ENCODE measurements at regions of chr6 and their contacts with region 1.

Region 1: GRCh38 chr6:119110601-119111548 is 32.4 kb upstream of the FAM184A start:
- DNase-seq: peak; percentile 51
- ATAC-seq: peak; percentile 86
- H3K4me3 Mint-ChIP-seq: no peak overlapping the region
- H3K27ac Mint-ChIP-seq: no peak overlapping the region
- H3K4me1 Mint-ChIP-seq: peaks cover 21% of the 10 kb centered on the region
- H3K27me3 Mint-ChIP-seq: no peaks in the 10 kb centered on the region

Region 2: DNA sequence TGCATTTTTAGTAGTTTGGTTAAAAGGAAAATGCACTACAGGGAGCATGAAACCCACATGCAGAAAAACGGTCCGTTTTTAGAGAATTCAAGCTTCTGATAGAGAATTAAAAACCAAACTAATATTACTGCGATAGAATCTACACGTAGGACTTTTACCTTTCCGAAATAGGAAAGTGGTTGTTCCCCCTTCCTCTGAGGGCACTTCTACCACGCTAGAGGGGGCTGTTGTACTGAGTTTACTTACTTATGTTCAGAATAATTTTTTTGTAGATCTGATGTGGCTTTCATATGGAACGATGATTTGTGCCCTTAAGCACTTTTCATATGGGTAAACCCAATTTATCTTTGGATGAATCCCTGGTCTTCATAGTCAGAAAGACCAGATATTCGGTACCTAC is 827.1 kb before region 1 on chr6:
- CTCF ChIA-PET with region 1: interaction called, 4 read pairs
- POLR2A ChIA-PET with region 1: no interaction called
- intact Hi-C with region 1: loop called (anchors 1 to 5 kb)
- DNase-seq: peak; percentile 65
- ATAC-seq: peak; percentile 61
- H3K4me3 Mint-ChIP-seq: no peak overlapping the region
- H3K27ac Mint-ChIP-seq: no peak overlapping the region
- H3K4me1 Mint-ChIP-seq: peaks cover 2% of the 10 kb centered on the region
- H3K27me3 Mint-ChIP-seq: peaks cover 4% of the 10 kb centered on the region

Region 3: DNA sequence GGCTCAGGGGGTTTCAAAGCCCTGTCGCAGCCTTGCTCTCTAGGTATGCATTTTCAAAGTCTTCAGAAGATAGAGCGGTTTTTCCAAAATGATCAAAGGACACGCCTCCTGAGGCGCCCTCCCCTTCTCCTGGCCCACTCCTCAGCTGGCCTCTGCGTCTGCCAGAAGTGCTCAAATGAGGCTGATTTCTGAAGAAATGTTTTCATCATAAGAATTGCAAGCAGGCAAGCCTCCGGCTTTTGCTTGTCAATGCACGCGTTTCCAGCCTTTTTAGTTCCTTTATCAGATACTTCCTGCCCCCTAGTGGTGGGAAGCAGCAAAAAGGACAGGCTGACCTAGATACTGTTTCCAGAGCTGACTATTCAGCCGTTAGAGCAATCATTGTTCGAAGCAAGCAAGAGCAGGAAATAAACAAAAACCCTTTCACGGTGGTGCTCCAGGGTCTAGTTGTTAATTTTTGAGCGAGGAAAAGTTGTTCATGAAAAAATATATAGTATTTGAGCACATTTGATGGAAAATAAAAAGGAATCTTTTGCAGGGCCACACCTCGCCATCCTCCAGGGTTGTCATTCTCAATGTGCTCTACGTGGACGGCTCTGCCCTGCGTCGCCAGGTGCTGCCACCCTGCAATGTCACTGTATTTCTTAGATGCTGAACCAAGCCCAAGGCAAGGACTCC is 310.3 kb before region 1 on chr6:
- CTCF ChIA-PET with region 1: interaction called, 13 read pairs
- POLR2A ChIA-PET with region 1: no interaction called
- intact Hi-C with region 1: loop called in 1 of 2 experiments (anchors 2 kb)
- DNase-seq: peak; percentile 89
- ATAC-seq: peak; percentile 96
- H3K4me3 Mint-ChIP-seq: no peak overlapping the region
- H3K27ac Mint-ChIP-seq: peak overlapping the region; percentile 7
- H3K4me1 Mint-ChIP-seq: peaks cover 28% of the 10 kb centered on the region
- H3K27me3 Mint-ChIP-seq: no peaks in the 10 kb centered on the region

Region 4: DNA sequence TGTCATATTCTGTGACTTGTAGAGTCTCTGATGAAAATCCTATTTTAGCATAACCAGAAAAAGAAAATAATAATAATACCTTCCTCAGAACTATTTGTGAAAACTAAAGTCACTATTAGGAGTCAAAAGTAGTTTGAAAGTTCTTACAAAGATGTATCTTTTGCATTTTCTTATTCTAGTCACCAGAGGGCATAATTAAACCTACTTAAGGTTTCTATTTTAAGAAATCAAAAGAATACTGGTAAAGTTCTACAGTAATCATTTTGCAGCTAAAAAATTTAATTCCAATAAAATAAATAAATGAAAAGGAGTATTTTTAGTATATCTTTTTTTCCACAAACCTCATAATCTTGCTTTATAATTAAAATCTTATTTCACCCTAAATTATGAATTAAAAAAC is 147.9 kb before region 1 on chr6:
- CTCF ChIA-PET with region 1: interaction called, 280 read pairs
- POLR2A ChIA-PET with region 1: no interaction called
- intact Hi-C with region 1: loop called (anchors 1 kb)
- DNase-seq: no peak
- ATAC-seq: no peak
- H3K4me3 Mint-ChIP-seq: no peak overlapping the region
- H3K27ac Mint-ChIP-seq: no peak overlapping the region
- H3K4me1 Mint-ChIP-seq: peaks cover 7% of the 10 kb centered on the region
- H3K27me3 Mint-ChIP-seq: no peaks in the 10 kb centered on the region

Region 5: GRCh38 chr6:119073307-119074051 is 37.4 kb before region 1 on chr6:
- CTCF ChIA-PET with region 1: interaction called, 15 read pairs
- POLR2A ChIA-PET with region 1: interaction called, 6 read pairs
- intact Hi-C with region 1: loop called in 1 of 2 experiments (anchors 2 kb)
- DNase-seq: no peak
- ATAC-seq: no peak
- H3K4me3 Mint-ChIP-seq: no peak overlapping the region
- H3K27ac Mint-ChIP-seq: peak overlapping the region; percentile 6
- H3K4me1 Mint-ChIP-seq: peaks cover 46% of the 10 kb centered on the region
- H3K27me3 Mint-ChIP-seq: no peaks in the 10 kb centered on the region

Region 6: DNA sequence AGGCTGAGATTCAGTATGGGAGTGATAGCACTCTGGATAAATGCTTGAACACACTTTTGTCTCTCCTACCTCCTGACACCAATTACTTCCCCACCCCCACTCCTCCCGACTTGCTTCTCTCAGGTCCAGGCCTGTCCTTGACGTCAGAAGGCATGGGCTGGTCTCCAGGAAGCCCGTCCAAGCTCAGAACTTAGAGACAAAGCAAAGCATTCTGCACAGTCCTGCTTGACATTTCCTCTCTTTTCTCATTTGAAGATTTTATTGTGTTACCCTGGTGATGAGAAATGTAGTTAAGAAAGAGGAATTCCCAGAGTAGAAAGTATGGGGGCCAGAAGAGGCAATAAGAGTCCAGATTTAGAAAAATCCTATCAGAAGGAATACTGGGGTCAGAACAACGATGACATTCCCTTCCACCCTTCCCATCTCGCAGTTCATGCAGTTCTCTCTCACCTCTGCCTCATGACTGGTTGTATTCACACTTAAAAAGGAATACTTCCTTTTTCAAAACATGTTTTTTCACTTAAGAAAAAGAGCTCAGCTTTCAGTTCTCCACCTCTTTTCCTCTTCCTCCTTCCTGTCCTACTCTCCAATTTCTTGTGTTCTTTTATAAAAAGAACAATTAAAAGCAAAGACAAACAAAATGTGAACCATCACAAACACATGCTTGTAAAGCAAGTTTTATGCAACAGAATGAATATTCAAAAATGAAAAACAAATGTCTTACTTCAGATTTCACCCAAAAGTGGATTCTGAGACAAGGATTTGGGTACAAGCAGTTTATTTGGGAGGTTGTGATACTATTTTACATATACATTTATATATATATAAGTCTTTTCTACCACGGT is 13.9 kb before region 1 on chr6:
- CTCF ChIA-PET with region 1: interaction called, 32 read pairs
- POLR2A ChIA-PET with region 1: no interaction called
- intact Hi-C with region 1: no loop called
- DNase-seq: no peak
- ATAC-seq: no peak
- H3K4me3 Mint-ChIP-seq: no peak overlapping the region
- H3K27ac Mint-ChIP-seq: no peak overlapping the region
- H3K4me1 Mint-ChIP-seq: peaks cover 18% of the 10 kb centered on the region
- H3K27me3 Mint-ChIP-seq: no peaks in the 10 kb centered on the region

Region 7: DNA sequence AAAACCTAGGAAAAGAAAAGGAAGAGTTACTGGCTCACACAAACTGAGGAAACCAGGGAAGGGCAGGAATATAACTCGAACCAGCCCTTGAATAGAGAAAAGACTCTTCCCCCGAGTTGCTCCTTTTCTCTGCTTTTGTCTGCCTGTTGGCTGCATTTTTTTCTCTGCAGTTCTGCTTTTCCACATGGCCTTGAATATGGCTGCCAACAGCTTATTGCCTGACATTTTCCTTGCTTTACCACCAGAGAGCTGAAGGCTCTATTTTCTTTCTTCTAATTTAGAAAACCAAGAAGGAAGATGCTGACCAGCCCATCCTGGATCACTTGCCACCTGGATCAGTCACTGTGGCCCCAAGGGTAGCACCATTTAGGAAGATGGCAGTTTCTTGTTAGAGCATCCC is 403.5 kb after region 1 on chr6:
- CTCF ChIA-PET with region 1: no interaction called
- POLR2A ChIA-PET with region 1: no interaction called
- intact Hi-C with region 1: no loop called
- DNase-seq: no peak
- ATAC-seq: no peak
- H3K4me3 Mint-ChIP-seq: no peak overlapping the region
- H3K27ac Mint-ChIP-seq: no peak overlapping the region
- H3K4me1 Mint-ChIP-seq: no peaks in the 10 kb centered on the region
- H3K27me3 Mint-ChIP-seq: peaks cover 6% of the 10 kb centered on the region